ENCODE measurements at regions of chr11 and their contacts with region 1.

Region 1: DNA sequence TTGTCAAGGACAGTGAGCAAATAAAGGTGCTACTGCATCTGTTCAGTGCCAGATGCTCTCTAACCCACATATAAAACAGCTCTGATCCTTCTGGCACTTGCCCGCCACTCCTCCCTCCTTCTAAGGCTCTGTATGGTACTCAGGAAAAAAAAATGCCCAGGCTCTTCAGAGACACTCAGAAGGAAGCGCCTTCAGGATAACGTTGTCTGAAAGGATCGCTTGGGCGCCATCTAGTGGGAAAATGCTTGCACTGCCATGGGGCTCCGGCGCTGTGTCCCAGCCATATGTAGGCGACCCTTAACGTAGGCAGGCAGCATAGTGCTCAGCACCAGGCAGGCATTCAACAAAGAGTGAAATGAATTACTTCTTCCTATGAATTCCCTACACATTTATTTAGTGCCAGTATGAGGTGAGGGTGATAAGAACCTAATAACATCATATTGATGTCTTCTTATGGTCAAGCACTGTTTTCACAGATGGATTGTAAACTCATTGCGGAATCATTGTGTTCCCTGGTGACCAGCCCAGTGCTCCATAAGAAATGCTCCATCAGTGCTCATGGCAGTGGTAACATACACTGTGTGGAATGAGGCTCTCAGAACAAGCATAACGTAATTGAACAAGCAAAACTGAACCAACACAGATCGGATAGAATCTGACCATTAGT is 39.6 kb downstream of the PAMR1 start:
- DNase-seq: peak; percentile 81
- H3K4me3 Mint-ChIP-seq: no peak overlapping the region
- H3K27ac Mint-ChIP-seq: no peak overlapping the region
- H3K4me1 Mint-ChIP-seq: no peaks in the 10 kb centered on the region
- H3K27me3 Mint-ChIP-seq: peaks cover 40% of the 10 kb centered on the region

Region 2: GRCh38 chr11:34997952-34998528 is 487.7 kb before region 1 on chr11:
- CTCF ChIA-PET with region 1: no interaction called
- POLR2A ChIA-PET with region 1: no interaction called
- intact Hi-C with region 1: loop called (anchors 2 kb)
- DNase-seq: no peak
- H3K4me3 Mint-ChIP-seq: peak overlapping the region; percentile 7
- H3K27ac Mint-ChIP-seq: peak overlapping the region; percentile 25
- H3K4me1 Mint-ChIP-seq: peaks cover 19% of the 10 kb centered on the region
- H3K27me3 Mint-ChIP-seq: no peaks in the 10 kb centered on the region

Region 3: GRCh38 chr11:35474688-35475087 is 11.1 kb before region 1 on chr11:
- CTCF ChIA-PET with region 1: interaction called, 13 read pairs
- POLR2A ChIA-PET with region 1: no interaction called
- intact Hi-C with region 1: no loop called
- DNase-seq: no peak
- H3K4me3 Mint-ChIP-seq: no peak overlapping the region
- H3K27ac Mint-ChIP-seq: no peak overlapping the region
- H3K4me1 Mint-ChIP-seq: no peaks in the 10 kb centered on the region
- H3K27me3 Mint-ChIP-seq: peaks cover 9% of the 10 kb centered on the region

Measured in activated CD4-positive, alpha-beta memory T cell treated with anti-CD3 and anti-CD28 coated beads for 36 hours (primary cell).